ENCODE measurements at regions of chr12 and their contacts with region 1.

Region 1: DNA sequence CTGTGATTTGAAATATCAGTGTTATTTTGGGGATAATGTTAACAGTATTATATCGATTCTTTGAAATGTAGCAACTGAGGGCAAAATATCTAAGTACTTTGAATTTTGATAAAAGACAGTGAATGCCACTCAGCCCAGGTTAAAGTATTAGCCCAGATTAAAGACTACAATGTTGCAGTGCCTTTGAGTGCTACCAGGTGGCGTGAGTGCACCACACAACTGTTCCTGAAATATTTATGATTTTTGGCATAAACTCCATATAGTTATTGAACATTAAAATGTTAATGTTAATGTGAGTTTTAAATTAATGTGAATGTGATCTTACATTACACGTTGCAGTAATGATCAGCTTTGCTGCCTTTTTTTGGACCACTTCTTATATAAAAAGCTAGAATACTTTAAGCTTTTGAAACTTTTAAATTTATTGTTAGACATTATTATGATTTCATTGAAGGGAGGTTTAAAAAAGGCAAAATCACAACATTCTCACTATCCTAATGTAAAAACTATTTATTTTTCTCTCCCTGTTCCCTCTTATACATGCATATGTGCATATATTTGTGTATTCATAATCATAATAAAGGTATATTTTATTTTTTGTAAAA is 22.5 kb downstream of the MRPS35 start:
- DNase-seq: no peak
- ATAC-seq: peak in 3 of 4 donors; percentile 37 to 64 (median 48)
- H3K4me3 ChIP-seq: no peak overlapping the region
- H3K27ac ChIP-seq: no peak overlapping the region
- H3K4me1 ChIP-seq: no peaks in the 10 kb centered on the region
- H3K27me3 ChIP-seq: no peaks in the 10 kb centered on the region
- CTCF ChIP-seq: peak; percentile 34 to 87 (median 73)
- POLR2A ChIP-seq: no peak

Region 2: GRCh38 chr12:27359578-27360340 is 373.4 kb before region 1 on chr12:
- intact Hi-C with region 1: no loop called
- DNase-seq: no peak
- ATAC-seq: no peak
- H3K4me3 ChIP-seq: no peak overlapping the region
- H3K27ac ChIP-seq: no peak overlapping the region
- H3K4me1 ChIP-seq: no peaks in the 10 kb centered on the region
- H3K27me3 ChIP-seq: no peaks in the 10 kb centered on the region
- CTCF ChIP-seq: no peak
- POLR2A ChIP-seq: no peak

Region 3: DNA sequence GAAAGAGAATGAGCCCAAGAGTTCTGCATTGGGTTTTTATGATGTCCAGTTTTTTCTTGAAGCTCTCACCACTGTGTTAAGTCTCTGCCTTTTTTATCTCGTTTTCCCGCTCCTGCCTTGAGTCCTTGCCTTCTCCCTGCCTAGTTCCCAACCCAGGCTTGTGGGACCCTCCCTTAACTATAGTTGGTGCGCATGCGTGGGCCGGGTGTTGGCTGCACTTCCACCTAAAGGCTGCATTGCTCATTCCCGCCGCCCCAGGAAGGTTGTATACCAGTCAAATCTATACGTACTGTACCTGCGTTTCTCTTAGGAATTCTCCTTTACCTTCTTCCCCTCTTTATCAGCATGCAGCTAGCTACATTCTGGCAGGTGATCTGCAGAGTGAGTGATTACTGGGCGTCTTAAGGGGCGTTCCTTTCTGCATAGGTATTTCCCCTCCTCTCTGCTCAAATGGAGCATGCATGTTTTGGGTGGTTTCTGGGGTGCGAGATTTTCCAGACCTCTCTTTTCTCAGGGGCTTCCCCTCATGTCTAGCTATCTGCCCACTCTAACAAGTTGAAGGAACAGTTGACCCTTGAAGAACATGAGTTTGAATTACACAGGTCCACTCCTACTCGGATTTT is 43.5 kb before region 1 on chr12:
- intact Hi-C with region 1: no loop called
- DNase-seq: no peak
- ATAC-seq: no peak
- H3K4me3 ChIP-seq: no peak overlapping the region
- H3K27ac ChIP-seq: no peak overlapping the region
- H3K4me1 ChIP-seq: no peaks in the 10 kb centered on the region
- H3K27me3 ChIP-seq: no peaks in the 10 kb centered on the region
- CTCF ChIP-seq: no peak
- POLR2A ChIP-seq: no peak

Region 4: GRCh38 chr12:27821259-27821973 is 88.3 kb after region 1 on chr12:
- intact Hi-C with region 1: loop called in 9 of 10 experiments (anchors 2 to 10 kb)
- DNase-seq: peak in 2 of 5 donors; percentile 16 to 24
- ATAC-seq: peak in 3 of 4 donors; percentile 68 to 74 (median 69)
- H3K4me3 ChIP-seq: no peak overlapping the region
- H3K27ac ChIP-seq: no peak overlapping the region
- H3K4me1 ChIP-seq: peaks cover 0 to 16% (median 0%) of the 10 kb centered on the region in 12 donors
- H3K27me3 ChIP-seq: peaks cover 0 to 4% (median 0%) of the 10 kb centered on the region in 9 donors
- CTCF ChIP-seq: peak; percentile 63 to 84 (median 74)
- POLR2A ChIP-seq: no peak

Region 5: GRCh38 chr12:27940756-27941402 is 207.7 kb after region 1 on chr12:
- intact Hi-C with region 1: loop called (anchors 2 to 10 kb)
- DNase-seq: peak; percentile 53 to 66 (median 62)
- ATAC-seq: peak in 3 of 4 donors; percentile 50 to 84 (median 73)
- H3K4me3 ChIP-seq: no peak overlapping the region
- H3K27ac ChIP-seq: no peak overlapping the region
- H3K4me1 ChIP-seq: no peaks in the 10 kb centered on the region
- H3K27me3 ChIP-seq: no peaks in the 10 kb centered on the region
- CTCF ChIP-seq: peak; percentile 65 to 86 (median 78)
- POLR2A ChIP-seq: no peak

Region 6: DNA sequence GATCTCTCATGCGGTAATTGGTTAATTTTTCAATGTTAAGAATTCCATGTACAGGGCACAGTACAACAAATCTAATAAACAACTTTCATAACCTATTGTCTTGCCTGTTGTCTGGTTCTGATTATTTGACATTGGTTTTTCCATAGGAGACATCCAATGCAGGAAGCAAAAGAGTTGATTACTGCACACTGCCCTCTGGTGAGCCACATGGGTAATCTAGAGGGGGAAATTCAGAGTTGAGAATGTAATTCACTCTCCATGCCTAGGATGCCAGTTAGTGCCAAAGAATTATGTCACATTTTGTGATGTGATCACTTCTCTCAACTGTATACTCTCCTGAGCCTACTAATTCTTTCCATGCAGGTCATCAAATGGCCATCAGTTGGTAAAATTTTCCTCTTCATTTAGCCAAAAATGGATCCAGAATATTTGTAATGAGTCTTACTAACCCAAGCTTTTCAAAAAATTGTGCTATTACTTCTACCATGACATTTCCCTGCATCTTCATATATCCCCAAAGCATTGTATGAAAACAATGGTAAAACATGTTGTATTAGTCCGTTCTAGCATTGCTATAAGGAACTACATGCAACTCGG is 439.4 kb after region 1 on chr12:
- intact Hi-C with region 1: loop called in 1 of 10 experiments (anchors 10 kb)
- DNase-seq: no peak
- ATAC-seq: peak in 2 of 4 donors; percentile 31 to 39
- H3K4me3 ChIP-seq: no peak overlapping the region
- H3K27ac ChIP-seq: no peak overlapping the region
- H3K4me1 ChIP-seq: no peaks in the 10 kb centered on the region
- H3K27me3 ChIP-seq: no peaks in the 10 kb centered on the region
- CTCF ChIP-seq: peak in 11 of 12 donors; percentile 11 to 60 (median 35)
- POLR2A ChIP-seq: no peak

Region 7: DNA sequence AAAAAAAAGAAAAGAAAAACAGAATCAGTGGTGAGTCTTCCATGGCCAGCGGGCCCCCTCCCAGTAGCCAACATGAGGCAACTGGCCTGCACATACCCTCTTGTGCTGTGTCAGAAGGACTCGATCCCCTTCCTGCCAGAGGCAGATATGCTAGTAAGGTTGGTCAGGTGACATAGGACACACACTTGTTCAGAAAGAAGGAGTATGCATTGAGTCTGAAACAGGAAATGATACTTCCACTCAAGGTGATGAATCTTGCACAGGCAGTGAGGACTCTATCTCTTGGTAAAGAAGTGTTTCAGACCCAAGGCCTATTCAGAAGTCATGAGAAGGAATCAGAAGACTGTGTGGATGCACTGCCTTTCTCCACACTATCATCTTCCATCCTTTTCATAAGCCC is 1146.2 kb after region 1 on chr12:
- intact Hi-C with region 1: loop called in 7 of 10 experiments (anchors 5 to 10 kb)
- DNase-seq: no peak
- ATAC-seq: no peak
- H3K4me3 ChIP-seq: no peak overlapping the region
- H3K27ac ChIP-seq: no peak overlapping the region
- H3K4me1 ChIP-seq: no peaks in the 10 kb centered on the region
- H3K27me3 ChIP-seq: peaks cover 0 to 5% (median 0%) of the 10 kb centered on the region in 9 donors
- CTCF ChIP-seq: no peak
- POLR2A ChIP-seq: no peak

Measured in heart left ventricle (tissue), 16 donors.